ENCODE measurements at regions of chr6 and their contacts with region 1.

Region 1: DNA sequence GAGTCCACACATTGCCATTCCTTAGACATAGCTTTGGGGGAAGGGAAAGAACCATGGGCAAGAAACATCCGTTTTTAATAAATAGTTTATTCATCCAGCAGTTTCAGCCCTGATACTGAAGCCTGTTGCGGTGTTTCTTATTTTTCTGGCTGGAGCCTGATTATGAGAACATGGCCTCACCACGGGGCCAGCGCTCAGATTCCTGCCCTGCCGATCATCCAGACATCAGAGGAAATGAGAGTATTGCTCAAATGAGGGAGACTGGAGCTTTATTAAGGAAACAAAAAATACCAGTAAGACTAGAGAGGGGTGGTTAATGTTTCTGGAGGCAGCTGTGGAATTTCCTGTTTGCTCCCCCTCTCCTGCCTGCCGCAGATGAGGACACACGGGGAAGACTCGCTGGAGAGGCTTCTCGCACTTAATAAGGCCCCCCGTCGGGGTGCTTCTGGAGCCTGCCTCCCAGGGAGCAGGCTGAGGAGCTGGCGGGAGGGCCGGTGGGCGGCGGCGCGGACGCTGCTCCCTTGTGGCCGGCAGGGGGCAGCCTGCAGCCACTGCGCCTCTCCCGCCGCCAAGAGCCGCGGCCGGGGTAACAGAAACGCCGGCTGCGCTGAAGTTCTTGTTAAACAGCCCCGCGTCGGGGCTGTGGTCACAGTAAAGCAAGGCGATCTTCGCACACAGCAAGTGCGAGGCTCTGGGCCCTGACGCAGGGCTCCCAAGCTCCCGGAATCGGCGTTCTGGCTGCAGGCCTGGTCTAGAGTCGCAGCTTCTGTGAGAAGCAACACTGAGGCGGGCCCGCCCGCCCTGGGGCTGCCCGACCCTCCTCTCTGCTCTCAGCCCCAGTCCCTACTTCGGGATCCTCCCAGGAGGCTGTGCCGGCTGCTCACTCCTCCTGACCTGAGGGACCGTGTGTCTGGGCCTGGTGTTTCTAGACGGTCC is 17.5 kb downstream of the LEMD2 start:
- DNase-seq: peak; percentile 89
- H3K4me3 ChIP-seq: no peak overlapping the region
- H3K27ac ChIP-seq: peak overlapping the region; percentile 64
- H3K4me1 ChIP-seq: peaks cover 45% of the 10 kb centered on the region
- H3K27me3 ChIP-seq: no peaks in the 10 kb centered on the region
- CTCF ChIP-seq: peak; percentile 89 to 94
- POLR2A ChIP-seq: peak; percentile 26

Region 2: GRCh38 chr6:33654831-33655554 is 116.4 kb before region 1 on chr6:
- CTCF ChIA-PET with region 1: no interaction called
- POLR2A ChIA-PET with region 1: no interaction called
- dilution Hi-C with region 1: no loop called
- intact Hi-C with region 1: no loop called
- DNase-seq: no peak
- H3K4me3 ChIP-seq: no peak overlapping the region
- H3K27ac ChIP-seq: no peak overlapping the region
- H3K4me1 ChIP-seq: no peaks in the 10 kb centered on the region
- H3K27me3 ChIP-seq: no peaks in the 10 kb centered on the region
- CTCF ChIP-seq: no peak
- POLR2A ChIP-seq: no peak

Region 3: DNA sequence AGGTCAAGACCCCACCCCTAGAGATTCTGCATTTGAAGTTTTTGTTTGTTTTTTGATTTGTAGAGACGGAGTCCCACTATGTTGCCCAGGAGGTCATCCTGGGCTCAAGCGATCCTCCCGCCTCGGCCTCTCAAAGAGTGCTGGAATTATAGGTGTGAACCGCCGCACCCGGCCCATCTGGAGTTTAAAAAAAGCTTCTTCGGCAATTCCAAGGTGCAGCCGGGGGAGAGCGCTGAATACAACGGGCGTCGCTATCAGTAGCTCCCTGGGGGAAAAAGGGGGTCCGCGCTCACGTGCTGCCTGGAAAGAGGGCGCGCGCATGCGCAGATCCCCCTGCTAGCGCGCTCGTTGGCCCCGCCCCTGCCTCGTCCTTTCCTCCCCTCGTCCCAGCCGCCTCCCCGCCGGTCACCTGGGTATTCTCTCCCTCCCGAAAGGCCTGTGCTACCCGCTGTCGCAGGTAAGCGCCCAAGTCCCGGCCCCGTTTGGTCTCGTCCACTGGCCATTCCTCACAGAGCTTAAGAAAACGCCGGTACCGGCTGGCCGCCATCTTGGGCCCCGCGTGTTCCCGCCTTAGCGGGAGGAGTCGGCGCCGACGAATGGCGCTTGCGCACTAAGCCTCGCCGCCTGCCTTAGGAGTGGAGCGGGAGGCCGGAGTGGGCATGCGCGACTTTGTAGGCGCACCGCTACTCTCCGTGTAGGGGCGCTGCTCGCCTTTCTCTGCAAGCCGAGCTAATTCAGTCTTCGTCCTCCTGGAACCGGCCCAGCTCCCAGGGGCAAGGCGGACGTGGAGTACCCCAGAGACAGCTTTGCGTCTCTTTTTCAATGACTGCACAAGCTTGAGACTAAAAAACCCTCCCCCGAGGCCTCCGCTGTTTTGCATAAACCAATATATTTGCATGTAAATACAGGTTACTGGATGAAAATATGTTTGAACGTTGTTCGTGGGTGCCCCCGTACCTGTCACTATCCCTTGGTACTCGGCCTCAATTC is 60.0 kb before region 1 on chr6 and contains the start of gene UQCC2:
- CTCF ChIA-PET with region 1: interaction called, 7 read pairs
- POLR2A ChIA-PET with region 1: interaction called, 3 read pairs
- dilution Hi-C with region 1: no loop called
- intact Hi-C with region 1: loop called (anchors 2 kb)
- DNase-seq: peak; percentile 97
- H3K4me3 ChIP-seq: peak within 1 kb of the TSS; percentile 74 to 92 (median 85)
- H3K27ac ChIP-seq: peak within 1 kb of the TSS; percentile 95
- H3K4me1 ChIP-seq: peaks cover 17% of the 10 kb centered on the region
- H3K27me3 ChIP-seq: no peaks in the 10 kb centered on the region
- CTCF ChIP-seq: peak; percentile 57 to 75
- POLR2A ChIP-seq: peak; percentile 97
- total RNA-seq, gene UQCC2: 91.5 and 95.3 TPM in 2 replicates

Region 4: GRCh38 chr6:33788694-33789549 is 17.5 kb after region 1 on chr6 and contains the start of gene LEMD2:
- CTCF ChIA-PET with region 1: interaction called, 155 read pairs
- POLR2A ChIA-PET with region 1: interaction called, 22 read pairs
- dilution Hi-C with region 1: no loop called
- intact Hi-C with region 1: loop called (anchors 1 kb)
- DNase-seq: peak; percentile 94
- H3K4me3 ChIP-seq: peak within 1 kb of the TSS; percentile 48 to 83 (median 76)
- H3K27ac ChIP-seq: peak within 1 kb of the TSS; percentile 94
- H3K4me1 ChIP-seq: peaks cover 41% of the 10 kb centered on the region
- H3K27me3 ChIP-seq: peaks cover 0 to 2% of the 10 kb centered on the region in 2 experiments
- CTCF ChIP-seq: no peak
- POLR2A ChIP-seq: peak; percentile 94
- total RNA-seq, gene LEMD2: 81.8 and 84.3 TPM in 2 replicates

Region 5: GRCh38 chr6:33822575-33823395 is 51.4 kb after region 1 on chr6:
- CTCF ChIA-PET with region 1: interaction called, 9 read pairs
- POLR2A ChIA-PET with region 1: no interaction called
- dilution Hi-C with region 1: no loop called
- intact Hi-C with region 1: loop called (anchors 1 kb)
- DNase-seq: peak; percentile 19
- H3K4me3 ChIP-seq: no peak overlapping the region
- H3K27ac ChIP-seq: no peak overlapping the region
- H3K4me1 ChIP-seq: peaks cover 6% of the 10 kb centered on the region
- H3K27me3 ChIP-seq: peaks cover 2 to 5% of the 10 kb centered on the region in 2 experiments
- CTCF ChIP-seq: peak in 1 of 2 donors; percentile 26
- POLR2A ChIP-seq: no peak

Region 6: DNA sequence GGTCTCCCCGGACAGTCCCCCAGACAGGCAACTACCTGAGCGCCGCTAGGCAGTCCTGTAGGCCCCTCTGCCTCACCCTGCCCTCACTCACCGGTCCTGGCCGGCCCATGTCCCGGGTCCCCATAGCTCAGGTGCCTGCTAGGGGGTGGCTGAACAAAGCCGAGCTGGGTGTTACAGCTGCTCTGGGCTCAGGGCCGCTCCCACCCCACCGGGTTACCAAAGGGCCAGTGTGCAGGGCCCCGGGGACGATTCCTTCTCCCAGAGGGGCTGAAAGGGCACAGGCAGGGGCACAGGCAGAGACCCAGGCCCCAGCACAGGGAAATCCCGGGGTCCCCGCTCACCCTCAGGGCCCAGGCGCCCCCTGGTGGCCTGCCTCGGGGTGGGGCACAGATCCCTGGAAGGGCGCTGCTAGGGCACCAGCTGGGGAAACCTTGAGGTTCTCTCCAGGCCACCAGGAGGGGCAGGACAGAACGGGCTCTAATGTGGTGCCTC is 256.1 kb after region 1 on chr6:
- CTCF ChIA-PET with region 1: interaction called, 286 read pairs
- POLR2A ChIA-PET with region 1: interaction called, 4 read pairs
- dilution Hi-C with region 1: no loop called
- intact Hi-C with region 1: loop called (anchors 1 kb)
- DNase-seq: peak; percentile 7
- H3K4me3 ChIP-seq: no peak overlapping the region
- H3K27ac ChIP-seq: no peak overlapping the region
- H3K4me1 ChIP-seq: no peaks in the 10 kb centered on the region
- H3K27me3 ChIP-seq: no peaks in the 10 kb centered on the region
- CTCF ChIP-seq: peak; percentile 74 to 90
- POLR2A ChIP-seq: no peak

Region 7: GRCh38 chr6:34154668-34155447 is 383.4 kb after region 1 on chr6:
- CTCF ChIA-PET with region 1: interaction called, 33 read pairs
- POLR2A ChIA-PET with region 1: no interaction called
- dilution Hi-C with region 1: no loop called
- intact Hi-C with region 1: loop called (anchors 1 kb)
- DNase-seq: peak; percentile 17
- H3K4me3 ChIP-seq: no peak overlapping the region
- H3K27ac ChIP-seq: no peak overlapping the region
- H3K4me1 ChIP-seq: no peaks in the 10 kb centered on the region
- H3K27me3 ChIP-seq: peaks cover 13 to 29% of the 10 kb centered on the region in 2 experiments
- CTCF ChIP-seq: peak; percentile 95
- POLR2A ChIP-seq: no peak

Measured in endothelial cell of umbilical vein (primary cell).